HepG2 (cell line): ENCODE measurements at regions of chr13 and their contacts with region 1.

Region 1: DNA sequence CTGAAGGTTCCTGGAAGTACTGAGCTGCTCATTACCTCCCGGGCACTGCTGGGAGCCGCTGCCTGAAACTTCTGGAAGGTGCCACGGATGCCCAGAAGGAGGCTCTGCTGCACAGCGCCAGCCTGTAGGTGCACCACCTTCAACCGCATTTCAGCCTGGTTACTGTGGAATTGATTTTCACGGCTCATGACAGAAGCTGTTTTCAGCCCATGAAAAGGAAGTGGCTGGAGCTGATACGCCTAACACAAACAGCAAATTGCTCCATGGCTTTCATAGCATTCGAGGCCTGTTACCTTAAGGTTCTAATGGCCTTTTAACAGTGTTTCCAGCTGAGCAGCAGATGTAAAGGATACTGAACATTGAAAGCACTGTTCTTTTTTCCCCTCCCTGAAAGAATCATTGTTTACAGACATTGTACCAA is 22.0 kb downstream of the GPC6 start:
- DNase-seq: peak; percentile 92
- ATAC-seq: peak; percentile 95
- H3K4me3 ChIP-seq: peak overlapping the region; percentile 44 to 57 (median 50); a peak in 5 of 6 replicates
- H3K27ac ChIP-seq: peak overlapping the region; percentile 95
- H3K4me1 ChIP-seq: peaks cover 45% of the 10 kb centered on the region
- H3K27me3 ChIP-seq: no peaks in the 10 kb centered on the region
- CTCF ChIP-seq: peak; percentile 95
- EP300 ChIP-seq: peak in 1 of 2 experiments; percentile 58; a peak in 1 of 4 replicates
- POLR2A ChIP-seq: peak in 1 of 2 experiments; percentile 60; a peak in 2 of 4 replicates
- RAD21 ChIP-seq: peak; percentile 97

Region 2: DNA sequence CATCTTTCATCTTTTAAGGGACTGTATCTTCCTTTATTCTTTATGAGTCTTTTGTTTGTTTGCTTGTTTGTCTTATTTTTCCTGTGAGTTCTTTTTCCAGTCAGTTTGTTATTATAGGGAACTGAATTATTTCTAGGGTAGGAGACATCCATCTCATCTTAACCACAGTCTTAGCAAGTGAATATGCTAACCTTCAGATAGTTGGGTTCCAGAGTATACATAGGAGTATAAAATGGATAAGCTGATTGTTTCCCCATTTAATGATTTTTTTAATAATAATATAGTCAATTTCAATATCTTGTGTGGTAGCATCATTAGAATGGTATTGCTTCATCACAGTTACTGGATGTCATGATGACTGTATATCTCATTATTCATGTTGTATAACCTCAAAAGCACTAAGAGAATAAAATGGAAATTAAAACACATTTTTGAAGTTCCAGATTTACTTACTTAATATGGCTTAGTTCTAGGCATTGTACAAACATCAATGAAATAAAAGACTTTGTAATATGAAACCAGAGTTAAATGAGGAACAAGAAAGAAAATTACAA is 11.0 kb after region 1 on chr13:
- CTCF ChIA-PET with region 1: no interaction called
- POLR2A ChIA-PET with region 1: interaction called, 15 read pairs
- in situ Hi-C with region 1: no loop called
- intact Hi-C with region 1: no loop called
- DNase-seq: no peak
- ATAC-seq: no peak
- H3K4me3 ChIP-seq: no peak overlapping the region
- H3K27ac ChIP-seq: no peak overlapping the region
- H3K4me1 ChIP-seq: peaks cover 14% of the 10 kb centered on the region; the same call in 1 of the 2 replicates
- H3K27me3 ChIP-seq: no peaks in the 10 kb centered on the region
- CTCF ChIP-seq: no peak
- EP300 ChIP-seq: no peak
- POLR2A ChIP-seq: no peak
- RAD21 ChIP-seq: no peak

Region 3: GRCh38 chr13:93767917-93768409 is 519.3 kb after region 1 on chr13:
- CTCF ChIA-PET with region 1: no interaction called
- POLR2A ChIA-PET with region 1: interaction called, 17 read pairs
- in situ Hi-C with region 1: loop called (anchors 25 kb)
- intact Hi-C with region 1: loop called (anchors 2 kb)
- DNase-seq: peak; percentile 74
- ATAC-seq: peak; percentile 94
- H3K4me3 ChIP-seq: peak overlapping the region in 2 of 3 experiments; percentile 56 to 58; a peak in 3 of 6 replicates
- H3K27ac ChIP-seq: peak overlapping the region; percentile 98
- H3K4me1 ChIP-seq: peaks cover 41% of the 10 kb centered on the region
- H3K27me3 ChIP-seq: no peaks in the 10 kb centered on the region
- CTCF ChIP-seq: no peak
- EP300 ChIP-seq: no peak
- POLR2A ChIP-seq: peak; percentile 73 to 88
- RAD21 ChIP-seq: no peak

Region 4: DNA sequence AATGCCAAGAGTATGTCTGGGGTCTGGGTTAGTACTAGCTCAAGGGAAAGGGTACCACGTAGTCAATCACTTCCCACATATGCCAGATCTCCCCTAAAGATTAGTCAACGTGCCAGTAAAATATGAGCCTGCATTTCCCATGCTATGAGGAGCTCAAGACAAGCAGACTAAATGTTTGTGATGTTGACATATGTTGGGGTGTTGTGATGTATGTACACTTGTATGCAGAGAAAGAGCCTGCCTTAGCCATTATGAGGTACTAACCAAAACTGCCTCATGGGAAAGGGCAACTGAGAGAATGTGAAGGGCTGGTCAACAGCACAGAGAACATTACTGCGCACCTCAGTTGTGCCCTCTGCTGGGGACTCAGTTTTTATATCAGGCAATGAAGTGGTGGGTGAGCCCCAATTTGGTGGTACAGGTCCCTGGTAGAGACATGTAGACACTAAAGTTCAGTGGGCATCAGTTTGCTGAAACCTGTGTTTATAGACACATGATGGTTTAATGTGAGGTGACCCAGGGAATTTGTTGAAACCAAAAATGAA is 943.9 kb after region 1 on chr13:
- CTCF ChIA-PET with region 1: interaction called, 3 read pairs
- POLR2A ChIA-PET with region 1: interaction called, 3 read pairs
- in situ Hi-C with region 1: loop called (anchors 25 kb)
- intact Hi-C with region 1: loop called (anchors 1 kb)
- DNase-seq: peak; percentile 30
- ATAC-seq: peak; percentile 79
- H3K4me3 ChIP-seq: no peak overlapping the region
- H3K27ac ChIP-seq: no peak overlapping the region
- H3K4me1 ChIP-seq: no peaks in the 10 kb centered on the region
- H3K27me3 ChIP-seq: no peaks in the 10 kb centered on the region; a peak in 1 of 5 replicates
- CTCF ChIP-seq: peak; percentile 64
- EP300 ChIP-seq: no peak
- POLR2A ChIP-seq: no peak
- RAD21 ChIP-seq: peak; percentile 62

Region 5: DNA sequence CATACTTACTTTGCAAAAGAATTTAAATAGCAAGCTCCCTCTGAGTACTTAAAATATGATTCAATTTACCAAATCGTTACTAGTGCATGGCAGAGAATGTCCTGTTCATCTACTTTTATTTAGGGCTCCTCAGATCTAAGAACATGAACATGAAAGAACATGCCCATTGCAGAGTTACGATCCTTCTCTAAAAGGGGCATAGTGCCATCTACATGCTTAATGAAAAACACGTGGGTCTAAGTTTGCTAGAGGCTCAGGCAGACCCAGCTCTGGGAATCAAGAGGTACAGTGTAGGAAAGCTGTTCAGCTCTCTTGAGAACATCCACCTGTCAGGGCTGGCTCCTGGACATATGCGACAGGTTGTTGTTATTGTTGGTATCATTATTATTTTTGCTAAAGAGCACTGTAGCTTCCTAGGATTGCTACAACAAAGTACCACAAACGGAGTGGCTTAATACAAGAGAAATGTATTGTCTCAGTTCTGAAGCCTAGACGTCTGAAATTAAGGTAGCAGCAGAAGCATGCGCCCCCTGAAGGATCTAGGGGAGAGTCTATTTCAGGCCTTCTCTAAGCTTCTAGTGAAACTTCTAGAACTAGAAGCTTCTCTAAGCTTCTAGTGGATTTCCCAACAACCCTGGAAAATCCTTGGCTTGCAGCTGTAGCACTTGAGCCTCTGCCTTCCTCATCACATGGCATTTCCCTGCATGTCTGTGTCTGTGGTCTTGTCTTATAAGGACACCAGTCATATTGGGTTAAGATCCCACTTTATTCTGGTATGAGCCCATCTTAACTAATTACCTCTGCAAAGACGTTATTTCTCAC is 1096.9 kb after region 1 on chr13:
- CTCF ChIA-PET with region 1: no interaction called
- POLR2A ChIA-PET with region 1: interaction called, 3 read pairs
- in situ Hi-C with region 1: loop called (anchors 25 kb)
- intact Hi-C with region 1: loop called (anchors 1 kb)
- DNase-seq: peak; percentile 22
- ATAC-seq: peak; percentile 65
- H3K4me3 ChIP-seq: no peak overlapping the region
- H3K27ac ChIP-seq: no peak overlapping the region
- H3K4me1 ChIP-seq: peaks cover 22% of the 10 kb centered on the region
- H3K27me3 ChIP-seq: no peaks in the 10 kb centered on the region
- CTCF ChIP-seq: peak; percentile 59
- EP300 ChIP-seq: no peak
- POLR2A ChIP-seq: no peak
- RAD21 ChIP-seq: peak; percentile 23; the same call in 1 of the 2 replicates

Region 6: DNA sequence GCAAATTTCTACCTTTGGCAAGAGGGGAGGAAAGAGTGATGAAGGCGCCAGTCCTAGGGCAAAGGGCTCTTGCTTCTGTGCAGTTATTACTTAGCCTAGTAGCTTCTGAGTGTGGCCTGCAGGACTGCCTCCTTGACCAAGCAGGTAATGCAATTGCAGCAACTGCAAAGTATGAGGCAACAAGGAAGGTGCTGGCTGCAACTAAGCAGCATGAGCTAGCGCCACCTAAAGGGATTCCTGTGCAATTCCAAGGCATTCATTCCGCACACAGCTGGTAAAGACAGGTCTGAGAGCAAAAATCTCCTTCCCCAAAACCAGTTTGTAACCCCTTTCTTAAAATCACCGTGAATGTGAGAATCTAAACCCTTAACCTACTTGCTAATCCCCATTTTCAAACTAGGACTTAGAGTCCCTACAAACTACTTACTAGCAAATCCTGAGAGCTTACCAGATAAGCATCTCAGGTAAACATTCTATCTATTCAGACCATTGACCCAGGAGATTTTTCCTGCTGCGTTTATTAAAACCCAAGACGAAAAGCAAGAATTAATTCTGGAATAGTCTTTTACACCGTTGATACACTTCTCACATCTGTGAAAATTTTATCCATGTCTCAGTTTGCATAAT is 1167.9 kb after region 1 on chr13:
- CTCF ChIA-PET with region 1: no interaction called
- POLR2A ChIA-PET with region 1: no interaction called
- in situ Hi-C with region 1: no loop called
- intact Hi-C with region 1: loop called (anchors 5 kb)
- DNase-seq: peak; percentile 67
- ATAC-seq: peak; percentile 98
- H3K4me3 ChIP-seq: no peak overlapping the region
- H3K27ac ChIP-seq: no peak overlapping the region
- H3K4me1 ChIP-seq: peaks cover 8% of the 10 kb centered on the region
- H3K27me3 ChIP-seq: no peaks in the 10 kb centered on the region; a peak in 1 of 5 replicates
- CTCF ChIP-seq: peak; percentile 87
- EP300 ChIP-seq: no peak
- POLR2A ChIP-seq: no peak
- RAD21 ChIP-seq: peak; percentile 62